CD4-positive, alpha-beta memory T cell (primary cell): ENCODE measurements at regions of chr3 and their contacts with region 1.

Region 1: GRCh38 chr3:192566706-192567290 is 160.5 kb downstream of the FGF12 start:
- DNase-seq: peak; percentile 39 to 54 (median 46)
- H3K4me3 ChIP-seq: no peak overlapping the region
- H3K4me3 Mint-ChIP-seq: no peak overlapping the region
- H3K27ac ChIP-seq: no peak overlapping the region
- H3K27ac Mint-ChIP-seq: no peak overlapping the region
- H3K4me1 ChIP-seq: no peaks in the 10 kb centered on the region
- H3K4me1 Mint-ChIP-seq: peaks cover 0 to 9% (median 3%) of the 10 kb centered on the region in 4 donors
- H3K27me3 ChIP-seq: no peaks in the 10 kb centered on the region
- H3K27me3 Mint-ChIP-seq: peaks cover 2% of the 10 kb centered on the region in 2 donors

Region 2: GRCh38 chr3:192620275-192620674 is 53.5 kb after region 1 on chr3:
- CTCF ChIA-PET with region 1: no interaction called
- POLR2A ChIA-PET with region 1: no interaction called
- intact Hi-C with region 1: no loop called
- DNase-seq: no peak
- H3K4me3 ChIP-seq: no peak overlapping the region
- H3K4me3 Mint-ChIP-seq: no peak overlapping the region
- H3K27ac ChIP-seq: no peak overlapping the region
- H3K27ac Mint-ChIP-seq: no peak overlapping the region
- H3K4me1 ChIP-seq: no peaks in the 10 kb centered on the region
- H3K4me1 Mint-ChIP-seq: no peaks in the 10 kb centered on the region
- H3K27me3 ChIP-seq: no peaks in the 10 kb centered on the region
- H3K27me3 Mint-ChIP-seq: no peaks in the 10 kb centered on the region

Region 3: GRCh38 chr3:192802957-192803899 is 236.4 kb after region 1 on chr3:
- CTCF ChIA-PET with region 1: no interaction called
- POLR2A ChIA-PET with region 1: no interaction called
- intact Hi-C with region 1: loop called (anchors 2 kb)
- DNase-seq: no peak
- H3K4me3 ChIP-seq: no peak overlapping the region
- H3K4me3 Mint-ChIP-seq: no peak overlapping the region
- H3K27ac ChIP-seq: no peak overlapping the region
- H3K27ac Mint-ChIP-seq: no peak overlapping the region
- H3K4me1 ChIP-seq: no peaks in the 10 kb centered on the region
- H3K4me1 Mint-ChIP-seq: peaks cover 0 to 9% (median 4%) of the 10 kb centered on the region in 4 donors
- H3K27me3 ChIP-seq: no peaks in the 10 kb centered on the region
- H3K27me3 Mint-ChIP-seq: no peaks in the 10 kb centered on the region